Heart right ventricle (tissue), 16 donors: ENCODE measurements at regions of chr20 and their contacts with region 1.

Region 1: DNA sequence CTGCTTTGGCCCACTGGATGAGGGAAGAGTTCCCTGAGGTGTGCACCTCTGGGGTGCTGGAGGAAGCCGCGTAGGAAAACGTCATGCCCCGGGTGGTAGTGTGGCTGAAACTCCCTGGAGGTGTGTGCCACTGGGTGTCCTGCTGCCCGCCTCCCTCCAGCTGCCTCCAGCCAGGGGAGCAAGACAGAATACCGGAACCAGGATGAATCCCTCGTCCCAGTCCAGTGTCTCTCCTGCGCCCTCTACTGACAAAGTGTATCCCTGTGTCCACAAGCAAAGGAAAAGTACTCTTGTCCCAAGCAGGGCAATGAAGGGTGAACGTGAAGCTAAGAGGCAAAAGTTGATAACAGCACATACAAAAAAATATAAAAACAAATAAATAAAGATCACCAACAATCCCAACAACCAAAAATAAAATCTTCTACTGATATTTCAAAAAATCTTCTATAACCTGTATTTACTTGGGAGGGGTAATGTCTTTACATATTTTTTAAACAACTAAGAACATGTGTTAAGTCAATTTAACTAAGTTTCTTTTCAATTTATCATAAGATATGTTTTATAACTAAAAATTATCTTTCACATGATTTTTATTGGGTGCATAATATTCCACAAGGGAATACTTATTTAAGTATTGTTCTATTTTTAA is 437.6 kb downstream of the MAFB start:
- DNase-seq: no peak
- ATAC-seq: no peak
- H3K4me3 ChIP-seq: no peak overlapping the region
- H3K27ac ChIP-seq: no peak overlapping the region
- H3K4me1 ChIP-seq: peaks cover 0 to 6% (median 0%) of the 10 kb centered on the region in 9 donors
- H3K27me3 ChIP-seq: peaks cover 0 to 6% (median 0%) of the 10 kb centered on the region in 7 donors
- CTCF ChIP-seq: peak in 7 of 9 donors; percentile 25 to 55 (median 39)

Region 2: GRCh38 chr20:39885975-39886649 is 365.3 kb before region 1 on chr20:
- intact Hi-C with region 1: loop called in 3 of 10 experiments (anchors 5 to 10 kb)
- DNase-seq: peak; percentile 51 to 69
- ATAC-seq: peak; percentile 61 to 88 (median 82)
- H3K4me3 ChIP-seq: no peak overlapping the region
- H3K27ac ChIP-seq: peak overlapping the region in 2 of 10 donors; percentile 10 to 50
- H3K4me1 ChIP-seq: peaks cover 0 to 11% (median 0%) of the 10 kb centered on the region in 9 donors
- H3K27me3 ChIP-seq: no peaks in the 10 kb centered on the region
- CTCF ChIP-seq: peak; percentile 24 to 71 (median 65)

Region 3: DNA sequence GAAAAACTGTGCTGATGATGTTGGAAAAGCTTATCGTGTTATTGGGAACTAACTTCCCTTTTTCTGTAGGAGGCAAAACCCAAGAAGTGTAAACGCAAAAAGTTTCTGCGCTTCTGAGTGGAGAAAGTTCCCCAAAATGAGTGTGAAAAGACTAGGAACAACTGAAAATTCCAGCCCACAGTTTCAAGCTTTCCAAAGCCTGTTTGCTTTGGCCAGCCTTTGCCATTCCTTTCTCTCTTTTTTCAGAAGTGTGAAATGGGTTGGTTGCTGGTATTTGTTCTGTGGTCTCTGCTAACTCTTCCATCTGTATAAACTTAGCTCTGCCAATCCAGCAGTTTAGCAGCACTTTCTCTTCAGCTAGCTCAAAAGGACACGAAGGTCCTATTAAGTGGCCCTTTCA is 53.7 kb before region 1 on chr20:
- intact Hi-C with region 1: no loop called
- DNase-seq: no peak
- ATAC-seq: peak in 7 of 8 donors; percentile 24 to 83 (median 62)
- H3K4me3 ChIP-seq: no peak overlapping the region
- H3K27ac ChIP-seq: peak overlapping the region in 3 of 10 donors; percentile 32 to 47 (median 40)
- H3K4me1 ChIP-seq: peaks cover 0 to 16% (median 0%) of the 10 kb centered on the region in 9 donors
- H3K27me3 ChIP-seq: no peaks in the 10 kb centered on the region
- CTCF ChIP-seq: no peak